ENCODE measurements at regions of chr17 and their contacts with region 1.

Region 1: GRCh38 chr17:81558941-81559806 is 7.0 kb upstream of the FAAP100 start:
- DNase-seq: peak; percentile 79 to 85
- ATAC-seq: peak; percentile 92 to 93
- H3K4me3 ChIP-seq: no peak overlapping the region
- H3K27ac ChIP-seq: peak overlapping the region; percentile 58 to 88
- H3K4me1 ChIP-seq: peaks cover 82% of the 10 kb centered on the region
- CTCF ChIP-seq: peak; percentile 62
- EP300 ChIP-seq: no peak; a peak in 1 of 5 replicates
- POLR2A ChIP-seq: no peak
- RAD21 ChIP-seq: peak; percentile 78 to 85

Region 2: DNA sequence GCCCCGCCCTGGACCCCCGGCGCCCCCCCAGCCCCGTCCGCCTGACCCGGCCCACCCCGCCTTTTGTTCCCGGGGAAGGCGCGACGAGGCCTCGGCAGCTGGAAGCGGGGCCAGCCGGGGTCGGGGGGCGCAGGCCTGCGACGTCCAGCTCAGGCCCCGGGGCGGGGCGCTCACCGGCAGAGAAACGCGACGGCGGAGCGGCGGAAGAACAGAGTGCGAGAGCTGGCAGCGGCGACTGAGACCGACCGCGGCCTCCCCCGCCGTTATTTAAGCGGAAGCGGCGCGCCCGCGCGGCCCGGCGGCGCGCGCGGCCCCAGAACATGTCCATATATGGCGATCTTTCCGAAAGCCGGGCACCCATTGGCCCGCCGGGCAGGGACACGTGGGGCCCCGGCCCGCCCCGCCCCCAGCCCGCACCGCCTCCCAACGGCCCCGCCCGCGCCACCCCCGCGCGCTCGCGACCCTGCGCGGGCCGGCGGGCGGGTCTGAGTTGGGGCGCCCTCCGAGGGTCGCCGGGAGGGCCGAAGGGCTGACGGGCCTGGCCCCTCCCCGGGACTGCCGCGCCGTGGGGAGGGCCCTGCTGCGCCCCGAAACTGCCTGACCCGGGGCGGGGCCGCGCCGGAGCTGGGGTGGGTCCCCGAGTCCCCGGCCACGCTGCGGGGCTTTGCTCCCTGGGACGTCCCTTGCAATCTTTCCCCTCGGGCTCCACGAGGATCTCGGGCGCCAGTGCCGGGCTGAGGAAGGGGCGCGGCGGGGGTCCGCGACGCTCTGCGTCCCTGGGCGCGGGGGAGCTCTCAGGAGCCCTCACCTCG is 46.4 kb before region 1 on chr17 and contains the start of gene ACTG1:
- CTCF ChIA-PET with region 1: no interaction called
- POLR2A ChIA-PET with region 1: no interaction called
- DNase-seq: peak; percentile 92 to 95
- ATAC-seq: peak; percentile 30 to 31
- H3K4me3 ChIP-seq: peak within 1 kb of the TSS; percentile 83
- H3K27ac ChIP-seq: peak within 1 kb of the TSS; percentile 99
- H3K4me1 ChIP-seq: peaks cover 29% of the 10 kb centered on the region
- CTCF ChIP-seq: no peak
- EP300 ChIP-seq: no peak
- POLR2A ChIP-seq: peak; percentile 98
- RAD21 ChIP-seq: no peak
- polyA plus RNA-seq, gene ACTG1: 2,042 and 2,306 TPM in 2 replicates

Region 3: DNA sequence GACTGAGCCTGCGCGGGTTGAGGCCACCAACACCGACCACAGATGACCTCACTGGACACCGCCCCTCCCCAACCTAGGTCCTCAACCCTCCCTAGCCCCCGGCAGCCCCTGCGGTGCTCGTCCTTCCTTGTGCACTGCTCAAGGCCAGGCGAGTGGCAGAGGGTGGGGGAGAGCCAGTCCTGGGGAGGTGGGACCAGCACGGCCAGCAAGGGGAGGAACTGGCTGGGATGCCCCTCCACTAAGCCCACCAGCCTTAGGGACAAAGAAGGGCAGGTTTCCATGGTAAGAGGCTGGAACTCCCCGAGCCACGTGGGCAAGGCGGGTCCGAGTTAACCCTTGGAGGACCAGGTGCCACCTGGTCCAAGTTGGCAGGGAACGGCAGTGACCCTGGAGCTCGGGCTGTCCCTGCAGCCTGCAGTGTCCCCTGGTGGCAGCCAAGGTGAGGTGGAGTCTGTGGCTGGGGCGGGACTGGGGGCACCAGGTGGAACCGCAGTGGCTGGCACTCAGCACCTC is 21.8 kb before region 1 on chr17:
- CTCF ChIA-PET with region 1: interaction called, 12 read pairs
- POLR2A ChIA-PET with region 1: no interaction called
- DNase-seq: peak; percentile 67 to 77
- ATAC-seq: peak; percentile 19 to 61; a peak in 5 of 6 replicates
- H3K4me3 ChIP-seq: no peak overlapping the region
- H3K27ac ChIP-seq: no peak overlapping the region
- H3K4me1 ChIP-seq: peaks cover 11% of the 10 kb centered on the region; the same call in 1 of the 3 replicates
- CTCF ChIP-seq: peak; percentile 51
- EP300 ChIP-seq: no peak
- POLR2A ChIP-seq: no peak
- RAD21 ChIP-seq: peak; percentile 59 to 69; a peak in 4 of 5 replicates

Region 4: GRCh38 chr17:81543339-81543675 is 15.9 kb before region 1 on chr17:
- CTCF ChIA-PET with region 1: interaction called, 13 read pairs
- POLR2A ChIA-PET with region 1: no interaction called
- DNase-seq: no peak
- ATAC-seq: no peak
- H3K4me3 ChIP-seq: no peak overlapping the region
- H3K27ac ChIP-seq: peak overlapping the region in 1 of 2 experiments; percentile 13; a peak in 1 of 6 replicates
- H3K4me1 ChIP-seq: no peaks in the 10 kb centered on the region
- CTCF ChIP-seq: no peak
- EP300 ChIP-seq: no peak
- POLR2A ChIP-seq: no peak
- RAD21 ChIP-seq: no peak

Region 5: DNA sequence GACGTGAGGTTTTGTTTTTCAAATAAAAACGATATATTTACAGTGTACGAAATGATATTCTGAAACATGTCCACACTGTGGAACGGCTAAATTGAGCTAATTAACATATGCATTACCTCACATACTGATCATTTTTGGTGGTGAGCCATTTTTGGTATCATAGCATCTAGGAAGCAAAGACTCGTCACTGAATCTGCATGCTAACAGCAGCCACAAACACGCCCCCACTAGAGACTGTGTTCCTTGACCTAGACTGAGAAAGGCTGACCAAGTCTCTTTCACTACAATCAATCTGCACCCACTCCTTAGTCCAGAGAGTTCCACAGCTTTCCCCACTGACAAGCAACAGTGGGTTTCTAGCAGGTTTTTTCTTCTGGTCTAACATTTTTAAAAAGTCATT is 48.3 kb after region 1 on chr17:
- CTCF ChIA-PET with region 1: interaction called, 1,604 read pairs
- POLR2A ChIA-PET with region 1: no interaction called
- DNase-seq: no peak
- ATAC-seq: no peak
- H3K4me3 ChIP-seq: no peak overlapping the region
- H3K27ac ChIP-seq: no peak overlapping the region
- H3K4me1 ChIP-seq: no peaks in the 10 kb centered on the region
- CTCF ChIP-seq: no peak
- EP300 ChIP-seq: no peak
- POLR2A ChIP-seq: no peak
- RAD21 ChIP-seq: no peak

Measured in A549 (cell line).